Activated B cell treated with CpG ODN at 0.5 μM for 24 hours (primary cell): ENCODE measurements at regions of chr14 and their contacts with region 1.

Region 1: GRCh38 chr14:74905375-74906142 is 17.5 kb downstream of the RPS6KL1 start:
- DNase-seq: peak; percentile 70
- ATAC-seq: peak; percentile 73
- H3K4me3 Mint-ChIP-seq: no peak overlapping the region
- H3K27ac Mint-ChIP-seq: peak overlapping the region; percentile 53
- H3K4me1 Mint-ChIP-seq: peaks cover 43% of the 10 kb centered on the region
- H3K27me3 Mint-ChIP-seq: no peaks in the 10 kb centered on the region
- CTCF ChIP-seq: peak; percentile 81

Region 2: DNA sequence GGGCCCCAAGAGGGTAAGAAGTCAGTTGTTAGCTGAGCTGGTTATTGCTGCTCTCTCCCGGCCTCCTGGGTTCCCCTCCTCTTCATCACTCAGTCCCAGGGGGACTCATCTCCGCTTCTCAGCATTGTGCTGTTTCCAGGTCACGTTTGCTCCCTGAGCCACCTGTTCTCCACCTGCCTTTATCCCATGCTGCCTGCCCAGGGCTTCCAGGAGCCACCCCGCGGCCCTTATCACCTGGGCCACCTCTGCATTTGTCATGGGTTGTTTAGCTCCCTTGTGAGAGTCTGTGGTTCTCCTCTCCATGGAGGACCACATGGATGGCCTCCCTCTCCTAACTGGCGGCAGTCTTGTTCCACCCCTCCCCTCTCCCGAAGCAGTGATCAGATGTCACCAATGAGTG is 515.6 kb before region 1 on chr14:
- CTCF ChIA-PET with region 1: no interaction called
- POLR2A ChIA-PET with region 1: no interaction called
- intact Hi-C with region 1: no loop called
- DNase-seq: no peak
- ATAC-seq: no peak
- H3K4me3 Mint-ChIP-seq: no peak overlapping the region
- H3K27ac Mint-ChIP-seq: no peak overlapping the region
- H3K4me1 Mint-ChIP-seq: no peaks in the 10 kb centered on the region
- H3K27me3 Mint-ChIP-seq: peaks cover 2% of the 10 kb centered on the region
- CTCF ChIP-seq: no peak

Region 3: DNA sequence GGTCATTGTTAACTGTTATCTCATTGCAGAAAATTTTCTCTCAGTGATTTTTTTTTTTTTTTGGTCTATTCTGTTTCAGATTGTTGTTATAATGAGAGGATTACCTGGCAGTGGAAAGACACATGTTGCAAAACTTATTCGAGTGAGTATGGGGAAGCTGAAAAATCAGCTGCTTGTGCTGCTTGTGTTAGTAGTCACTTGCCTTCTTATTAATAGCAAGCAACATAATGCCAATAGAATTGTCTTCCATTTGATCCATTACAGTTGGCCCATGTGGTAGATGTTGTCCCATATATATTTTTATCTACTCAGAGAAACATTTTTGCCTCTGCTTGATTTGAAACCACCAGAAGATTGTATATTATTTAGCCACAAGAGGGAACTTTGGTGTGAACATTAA is 89.4 kb before region 1 on chr14:
- CTCF ChIA-PET with region 1: no interaction called
- POLR2A ChIA-PET with region 1: no interaction called
- intact Hi-C with region 1: no loop called
- DNase-seq: no peak
- ATAC-seq: no peak
- H3K4me3 Mint-ChIP-seq: no peak overlapping the region
- H3K27ac Mint-ChIP-seq: no peak overlapping the region
- H3K4me1 Mint-ChIP-seq: no peaks in the 10 kb centered on the region
- H3K27me3 Mint-ChIP-seq: no peaks in the 10 kb centered on the region
- CTCF ChIP-seq: no peak

Region 4: DNA sequence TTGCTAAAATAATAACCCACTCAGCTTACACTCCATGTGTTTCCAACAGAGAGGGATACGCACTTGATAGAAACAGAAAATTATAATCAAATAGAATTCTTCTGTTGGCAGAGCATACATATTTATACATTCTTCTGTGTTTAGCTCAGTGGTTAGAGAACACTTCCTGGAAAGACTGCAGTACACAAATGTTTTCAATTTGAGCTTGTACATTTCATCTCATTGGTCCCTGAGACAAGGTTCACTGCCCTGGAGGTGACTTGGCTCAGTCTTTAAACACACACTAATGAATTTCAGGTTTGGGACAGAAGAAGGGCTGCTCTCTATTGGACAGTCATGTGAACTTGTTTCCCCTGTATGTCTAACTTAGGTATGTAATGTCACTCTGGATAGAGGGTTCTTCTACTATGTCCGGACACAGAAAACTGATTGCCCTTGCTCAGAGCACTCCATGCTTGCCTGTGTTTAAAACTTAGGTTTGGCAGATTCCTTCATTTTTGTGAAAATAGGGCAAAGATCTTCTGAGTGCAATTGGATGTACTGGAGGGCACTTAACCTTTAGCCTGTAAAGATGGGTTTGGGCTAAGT is 52.5 kb before region 1 on chr14:
- CTCF ChIA-PET with region 1: interaction called, 288 read pairs
- POLR2A ChIA-PET with region 1: no interaction called
- intact Hi-C with region 1: no loop called
- DNase-seq: no peak
- ATAC-seq: peak; percentile 34
- H3K4me3 Mint-ChIP-seq: no peak overlapping the region
- H3K27ac Mint-ChIP-seq: no peak overlapping the region
- H3K4me1 Mint-ChIP-seq: peaks cover 26% of the 10 kb centered on the region
- H3K27me3 Mint-ChIP-seq: no peaks in the 10 kb centered on the region
- CTCF ChIP-seq: no peak

Region 5: GRCh38 chr14:74881431-74882361 is 23.9 kb before region 1 on chr14 and contains the start of gene DLST:
- CTCF ChIA-PET with region 1: interaction called, 58 read pairs
- POLR2A ChIA-PET with region 1: interaction called, 15 read pairs
- intact Hi-C with region 1: loop called (anchors 2 kb)
- DNase-seq: peak; percentile 88
- ATAC-seq: peak; percentile 86
- H3K4me3 Mint-ChIP-seq: peak within 1 kb of the TSS; percentile 99
- H3K27ac Mint-ChIP-seq: peak within 1 kb of the TSS; percentile 97
- H3K4me1 Mint-ChIP-seq: peaks cover 51% of the 10 kb centered on the region
- H3K27me3 Mint-ChIP-seq: no peaks in the 10 kb centered on the region
- CTCF ChIP-seq: no peak
- total RNA-seq, gene DLST: 73.1 and 90.4 TPM in 2 replicates

Region 6: DNA sequence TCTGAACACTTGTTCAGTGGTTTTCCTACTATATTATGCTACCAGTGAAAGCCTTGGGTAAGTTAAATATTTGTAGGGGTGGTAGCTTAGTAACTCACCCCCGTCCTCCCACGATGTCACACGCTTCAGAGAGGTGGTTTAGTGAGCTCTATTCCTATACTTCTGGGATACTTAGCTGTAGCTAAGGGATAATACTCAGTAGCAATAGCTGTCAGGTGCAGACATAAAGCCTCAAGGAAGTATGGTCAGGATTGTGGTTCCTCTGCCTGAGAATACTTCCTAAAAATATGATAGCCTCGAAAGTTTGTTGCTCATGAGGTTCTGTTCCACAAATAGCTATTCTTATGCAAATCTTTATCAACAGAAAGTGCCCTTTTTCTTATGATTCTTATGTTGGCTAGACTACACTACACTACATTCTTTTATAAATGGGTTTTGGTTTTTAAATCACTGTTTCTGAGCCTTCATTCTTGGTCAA is 11.9 kb before region 1 on chr14:
- CTCF ChIA-PET with region 1: interaction called, 53 read pairs
- POLR2A ChIA-PET with region 1: interaction called, 5 read pairs
- intact Hi-C with region 1: no loop called
- DNase-seq: no peak
- ATAC-seq: peak; percentile 43
- H3K4me3 Mint-ChIP-seq: peak overlapping the region; percentile 29
- H3K27ac Mint-ChIP-seq: peak overlapping the region; percentile 83
- H3K4me1 Mint-ChIP-seq: peaks cover 31% of the 10 kb centered on the region
- H3K27me3 Mint-ChIP-seq: no peaks in the 10 kb centered on the region
- CTCF ChIP-seq: no peak

Region 7: GRCh38 chr14:75088574-75089373 is 183.2 kb after region 1 on chr14:
- CTCF ChIA-PET with region 1: interaction called, 12 read pairs
- POLR2A ChIA-PET with region 1: no interaction called
- intact Hi-C with region 1: no loop called
- DNase-seq: no peak
- ATAC-seq: peak; percentile 37
- H3K4me3 Mint-ChIP-seq: no peak overlapping the region
- H3K27ac Mint-ChIP-seq: no peak overlapping the region
- H3K4me1 Mint-ChIP-seq: no peaks in the 10 kb centered on the region
- H3K27me3 Mint-ChIP-seq: no peaks in the 10 kb centered on the region
- CTCF ChIP-seq: peak; percentile 72